ENCODE measurements at regions of chr18 and their contacts with region 1.

Region 1: DNA sequence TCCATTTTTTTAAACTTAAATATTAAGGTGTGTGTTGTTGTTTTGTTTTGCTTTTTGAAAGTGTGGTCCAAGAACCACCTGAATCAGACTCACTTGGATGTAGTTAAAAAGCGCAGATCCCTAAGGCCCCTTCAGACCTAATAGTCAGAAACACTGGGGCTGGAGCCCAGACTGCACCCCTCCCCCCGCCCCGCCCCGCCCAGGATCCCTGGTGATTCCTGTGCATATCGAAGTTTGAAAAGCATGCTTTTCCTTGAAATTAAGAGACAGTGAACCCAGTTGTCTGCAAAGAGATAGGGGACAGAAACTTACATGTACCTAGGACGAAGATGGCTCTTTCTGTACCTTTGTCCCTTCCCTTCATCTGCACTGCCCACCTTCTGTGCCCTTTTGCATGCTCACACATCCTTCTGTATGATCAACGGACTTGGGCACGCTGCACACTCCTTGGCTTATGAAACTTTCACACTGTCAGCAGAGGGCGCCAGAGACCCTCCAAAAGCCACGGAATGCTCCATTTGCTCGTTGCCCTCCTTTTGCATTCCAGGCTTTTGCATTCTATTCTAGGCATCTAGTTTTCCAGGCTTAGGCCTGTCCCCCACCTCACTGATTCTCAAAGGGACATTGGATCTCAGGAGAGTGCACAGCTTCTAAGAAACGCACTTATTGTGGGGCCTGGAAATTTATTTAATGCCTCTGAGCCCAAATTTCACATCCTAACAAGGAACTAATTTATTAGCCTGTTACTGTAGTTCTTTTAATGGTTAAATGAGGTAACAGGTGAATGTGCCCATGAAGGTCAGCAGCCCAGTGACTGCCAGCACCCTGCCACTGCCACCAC is 32.8 kb upstream of the SLC14A1 start:
- DNase-seq: peak; percentile 79
- ATAC-seq: peak; percentile 87

Region 2: GRCh38 chr18:45637546-45638327 is 53.5 kb before region 1 on chr18:
- intact Hi-C with region 1: no loop called
- DNase-seq: no peak
- ATAC-seq: no peak

Region 3: GRCh38 chr18:45664824-45665763 is 26.1 kb before region 1 on chr18:
- intact Hi-C with region 1: loop called (anchors 2 kb)
- DNase-seq: no peak
- ATAC-seq: peak; percentile 55

Region 4: DNA sequence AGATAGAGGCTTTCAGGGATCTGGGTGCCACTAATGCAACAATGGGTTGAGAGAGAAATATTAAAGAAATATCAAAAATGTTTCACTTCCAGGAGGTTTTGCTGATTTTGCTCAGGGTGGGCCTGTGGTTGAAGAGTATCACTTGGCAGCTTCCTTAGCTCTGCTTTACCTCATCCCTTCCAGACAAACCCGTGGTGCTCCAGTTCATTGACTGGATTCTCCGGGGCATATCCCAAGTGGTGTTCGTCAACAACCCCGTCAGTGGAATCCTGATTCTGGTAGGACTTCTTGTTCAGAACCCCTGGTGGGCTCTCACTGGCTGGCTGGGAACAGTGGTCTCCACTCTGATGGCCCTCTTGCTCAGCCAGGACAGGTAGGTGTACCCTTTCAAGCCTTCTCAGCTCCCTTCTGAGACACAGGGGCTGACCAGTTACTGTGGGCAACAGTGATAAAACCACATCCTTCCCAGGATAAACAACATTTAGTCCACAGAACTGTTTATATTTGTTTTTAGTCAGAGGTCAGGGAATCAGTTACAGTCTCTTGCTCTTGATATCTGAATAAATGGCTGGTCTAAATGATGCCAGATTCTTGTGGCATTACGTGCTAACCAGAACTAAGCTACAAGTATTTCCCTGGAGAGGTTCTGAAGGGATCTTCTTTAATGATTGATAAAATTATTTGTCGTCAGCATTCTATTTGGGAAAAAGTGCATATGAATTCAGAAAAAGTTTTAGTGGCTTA is 39.8 kb after region 1 on chr18:
- intact Hi-C with region 1: no loop called
- DNase-seq: no peak
- ATAC-seq: no peak

Region 5: DNA sequence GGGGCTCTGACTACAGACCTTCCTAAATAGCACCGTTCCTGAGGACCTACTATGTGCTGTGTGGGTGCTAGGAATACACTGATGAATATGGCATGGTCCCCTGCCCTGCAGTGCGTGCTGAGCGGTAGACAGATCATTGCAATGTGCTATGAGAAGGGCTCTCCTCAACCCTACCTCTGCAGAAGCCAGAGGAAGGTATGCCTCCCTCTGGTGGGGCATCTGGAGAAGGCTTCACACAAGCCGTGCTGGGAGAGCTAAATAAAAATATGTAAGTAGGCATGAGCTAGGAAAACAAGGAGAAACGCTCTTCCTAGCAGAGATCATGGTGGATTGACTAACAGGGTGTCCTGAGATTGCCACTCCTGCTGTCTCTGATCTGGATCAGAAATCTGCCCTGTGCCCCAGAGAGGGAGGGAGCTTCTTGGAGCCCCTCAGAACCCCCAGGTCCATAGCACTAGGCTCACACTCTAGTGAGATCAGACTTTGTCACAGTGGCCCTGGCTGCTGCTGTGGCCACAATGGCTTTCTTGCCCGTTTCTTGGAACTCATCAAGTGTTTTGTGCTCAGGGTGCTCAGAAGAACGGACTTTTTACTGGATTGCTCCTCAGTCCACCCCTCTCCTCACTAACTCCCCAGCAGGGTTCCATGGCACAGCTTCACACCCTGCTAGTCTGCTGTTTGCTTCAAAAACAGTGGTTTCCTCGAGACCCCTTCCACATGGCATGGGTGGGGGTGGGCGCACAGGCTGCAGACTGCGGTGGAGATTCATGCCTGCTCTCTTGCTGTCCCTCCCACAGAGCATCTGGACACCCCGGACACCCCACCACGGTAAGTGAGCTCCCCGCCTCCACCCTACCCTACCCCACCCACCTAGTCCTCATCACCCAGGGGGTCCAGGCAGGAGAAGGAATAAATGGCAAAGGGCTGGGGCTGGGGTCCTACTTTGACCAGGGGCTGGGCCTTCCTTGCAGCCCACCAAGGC is 148.5 kb after region 1 on chr18:
- intact Hi-C with region 1: loop called (anchors 1 kb)
- DNase-seq: no peak
- ATAC-seq: peak; percentile 44

Region 6: DNA sequence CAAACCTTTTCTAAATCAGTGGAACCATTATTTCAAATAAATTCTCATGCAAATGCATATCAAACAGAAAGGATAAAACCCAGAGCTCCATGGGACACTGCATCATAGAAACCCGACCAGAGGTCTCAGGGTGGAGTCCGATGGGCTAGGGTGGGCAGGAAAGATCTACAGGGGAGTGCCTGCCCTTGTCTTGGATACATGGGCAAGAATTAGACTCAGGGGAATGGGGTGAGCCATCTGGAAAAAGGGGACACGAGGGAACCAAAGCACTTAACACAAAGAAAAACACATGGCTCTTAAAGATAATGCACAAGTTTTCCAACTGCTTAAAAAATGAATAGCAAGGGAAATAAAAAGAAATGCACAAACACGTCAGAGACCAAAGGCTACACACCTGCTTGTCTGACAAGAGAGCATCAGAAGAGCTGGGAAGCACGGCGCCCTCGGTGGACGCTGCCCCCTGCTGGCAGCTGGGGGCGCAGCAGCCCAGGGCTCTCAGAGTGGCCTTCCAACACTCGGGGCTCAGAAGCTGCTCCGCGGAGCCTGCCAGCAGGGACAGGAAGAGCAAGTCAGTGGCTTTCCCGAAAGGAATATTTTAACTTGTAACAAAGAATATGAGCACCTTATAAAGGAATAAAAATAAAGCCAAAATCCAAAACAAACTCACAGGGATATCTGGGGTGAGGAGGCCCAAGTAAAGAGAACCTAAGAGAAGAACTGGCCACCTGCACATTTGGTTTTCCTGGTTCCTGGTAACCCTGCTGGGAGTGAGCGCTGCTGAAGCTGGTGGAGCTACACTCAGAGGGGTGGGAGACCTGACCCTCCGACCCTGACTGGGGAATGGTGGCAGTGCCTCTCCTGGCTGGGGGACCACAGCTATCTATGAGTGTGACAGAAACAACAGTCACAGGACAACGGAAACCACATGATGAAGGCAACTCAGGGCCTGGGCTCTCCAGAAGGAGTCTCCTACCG is 188.8 kb after region 1 on chr18:
- intact Hi-C with region 1: loop called (anchors 1 kb)
- DNase-seq: peak; percentile 88
- ATAC-seq: peak; percentile 90

Region 7: GRCh38 chr18:45974088-45974536 is 282.9 kb after region 1 on chr18:
- intact Hi-C with region 1: loop called (anchors 2 kb)
- DNase-seq: no peak
- ATAC-seq: peak; percentile 64

Region 8: DNA sequence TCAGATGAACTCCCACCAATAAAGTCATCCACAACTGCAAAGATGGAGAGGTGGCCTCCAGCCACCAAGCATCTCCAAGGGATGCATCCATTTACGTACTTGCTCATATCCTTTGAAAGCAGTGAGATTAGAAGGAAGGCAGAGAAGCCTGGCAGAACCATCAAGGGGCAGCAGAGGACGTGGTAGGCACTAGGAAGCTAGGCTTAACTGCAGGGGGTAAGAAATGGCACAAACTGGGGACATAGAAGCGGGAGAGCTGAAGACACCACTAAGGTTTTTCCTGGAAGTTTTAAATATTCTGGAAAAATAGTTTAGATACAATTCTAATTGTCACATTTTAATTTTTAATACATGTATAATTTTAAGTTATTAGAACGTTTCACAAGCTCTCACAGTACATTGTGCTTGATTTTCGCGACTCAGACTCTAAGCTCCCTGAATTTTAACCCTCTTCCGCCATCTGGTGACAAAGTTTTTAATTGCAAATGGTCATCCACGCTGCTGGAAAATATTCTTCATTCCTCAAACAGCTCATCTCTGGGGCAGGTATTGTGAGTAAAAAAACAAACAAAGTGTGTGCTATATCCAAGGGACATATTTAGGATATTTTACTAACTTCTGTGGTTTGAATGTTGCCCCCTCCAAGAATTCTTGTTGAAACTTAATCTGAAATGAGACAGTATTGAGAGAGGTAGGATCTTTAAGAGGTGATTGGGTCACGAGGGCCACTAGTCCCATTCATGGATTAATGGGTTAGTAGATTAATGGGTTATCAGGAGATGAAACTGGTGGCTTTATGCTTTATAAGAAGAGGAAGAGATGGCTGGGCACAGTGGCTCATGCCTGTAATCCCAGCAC is 382.5 kb after region 1 on chr18:
- intact Hi-C with region 1: loop called (anchors 5 kb)
- DNase-seq: no peak
- ATAC-seq: peak; percentile 39

Measured in Right ventricle myocardium inferior (tissue), 1 donor.